Calu3 (cell line): ENCODE measurements at regions of chr3 and their contacts with region 1.

Region 1: GRCh38 chr3:135106445-135106844 is 311.4 kb downstream of the EPHB1 start:
- DNase-seq: peak; percentile 92
- H3K4me3 Mint-ChIP-seq: no peak overlapping the region
- H3K27ac Mint-ChIP-seq: peak overlapping the region; percentile 52
- H3K4me1 Mint-ChIP-seq: peaks cover 19% of the 10 kb centered on the region
- H3K27me3 Mint-ChIP-seq: peaks cover 3% of the 10 kb centered on the region
- CTCF ChIP-seq: no peak

Region 2: GRCh38 chr3:133439563-133439962 is 1666.9 kb before region 1 on chr3:
- CTCF ChIA-PET with region 1: no interaction called
- intact Hi-C with region 1: loop called (anchors 5 kb)
- DNase-seq: no peak
- H3K4me3 Mint-ChIP-seq: no peak overlapping the region
- H3K27ac Mint-ChIP-seq: no peak overlapping the region
- H3K4me1 Mint-ChIP-seq: peaks cover 30% of the 10 kb centered on the region
- H3K27me3 Mint-ChIP-seq: no peaks in the 10 kb centered on the region
- CTCF ChIP-seq: no peak

Region 3: GRCh38 chr3:134473868-134474546 is 632.4 kb before region 1 on chr3:
- CTCF ChIA-PET with region 1: no interaction called
- intact Hi-C with region 1: no loop called
- DNase-seq: peak; percentile 94
- H3K4me3 Mint-ChIP-seq: no peak overlapping the region
- H3K27ac Mint-ChIP-seq: no peak overlapping the region
- H3K4me1 Mint-ChIP-seq: peaks cover 23% of the 10 kb centered on the region
- H3K27me3 Mint-ChIP-seq: no peaks in the 10 kb centered on the region
- CTCF ChIP-seq: peak; percentile 76

Region 4: DNA sequence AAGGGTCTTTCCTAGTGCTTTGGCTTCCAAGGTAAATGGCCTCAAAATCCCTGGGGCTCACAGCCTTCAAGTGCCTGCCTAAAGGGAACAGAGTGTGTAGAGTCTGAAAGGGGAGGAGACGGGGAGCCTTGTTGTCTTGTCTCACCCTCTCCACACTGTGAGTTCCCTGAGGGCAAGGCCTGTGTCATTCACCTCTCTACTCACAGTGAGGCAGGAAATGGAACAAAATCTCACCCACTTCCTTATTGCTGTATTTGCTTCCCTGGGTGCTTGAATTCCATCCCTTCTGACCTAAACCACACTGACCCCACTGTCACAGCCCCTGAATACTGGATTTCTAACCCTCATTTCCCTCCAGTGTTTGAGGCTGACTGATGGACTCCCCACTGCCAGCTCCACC is 113.9 kb before region 1 on chr3:
- CTCF ChIA-PET with region 1: no interaction called
- intact Hi-C with region 1: no loop called
- DNase-seq: no peak
- H3K4me3 Mint-ChIP-seq: no peak overlapping the region
- H3K27ac Mint-ChIP-seq: no peak overlapping the region
- H3K4me1 Mint-ChIP-seq: no peaks in the 10 kb centered on the region
- H3K27me3 Mint-ChIP-seq: peaks cover 29% of the 10 kb centered on the region
- CTCF ChIP-seq: no peak

Region 5: DNA sequence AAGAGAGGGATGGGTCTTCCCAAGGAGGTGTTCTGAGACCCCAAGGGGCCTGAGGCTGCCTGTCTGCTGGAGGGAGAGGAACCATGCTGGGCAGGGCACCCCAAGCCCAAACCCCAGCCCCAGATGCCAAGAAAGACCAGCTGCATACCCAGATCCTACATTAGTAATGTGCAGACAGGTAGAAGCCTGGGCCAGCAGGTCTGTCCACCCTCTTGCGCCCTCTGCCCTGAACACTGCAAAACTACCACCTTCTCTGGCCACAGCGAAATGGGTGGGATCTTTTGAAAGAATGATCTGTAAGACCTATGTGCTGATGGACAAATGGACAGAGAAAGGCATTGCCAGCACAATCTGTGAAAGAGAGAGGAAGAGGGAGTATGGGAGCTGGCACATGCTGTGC is 28.2 kb before region 1 on chr3:
- CTCF ChIA-PET with region 1: no interaction called
- intact Hi-C with region 1: no loop called
- DNase-seq: no peak
- H3K4me3 Mint-ChIP-seq: no peak overlapping the region
- H3K27ac Mint-ChIP-seq: no peak overlapping the region
- H3K4me1 Mint-ChIP-seq: no peaks in the 10 kb centered on the region
- H3K27me3 Mint-ChIP-seq: peaks cover 44% of the 10 kb centered on the region
- CTCF ChIP-seq: no peak

Region 6: DNA sequence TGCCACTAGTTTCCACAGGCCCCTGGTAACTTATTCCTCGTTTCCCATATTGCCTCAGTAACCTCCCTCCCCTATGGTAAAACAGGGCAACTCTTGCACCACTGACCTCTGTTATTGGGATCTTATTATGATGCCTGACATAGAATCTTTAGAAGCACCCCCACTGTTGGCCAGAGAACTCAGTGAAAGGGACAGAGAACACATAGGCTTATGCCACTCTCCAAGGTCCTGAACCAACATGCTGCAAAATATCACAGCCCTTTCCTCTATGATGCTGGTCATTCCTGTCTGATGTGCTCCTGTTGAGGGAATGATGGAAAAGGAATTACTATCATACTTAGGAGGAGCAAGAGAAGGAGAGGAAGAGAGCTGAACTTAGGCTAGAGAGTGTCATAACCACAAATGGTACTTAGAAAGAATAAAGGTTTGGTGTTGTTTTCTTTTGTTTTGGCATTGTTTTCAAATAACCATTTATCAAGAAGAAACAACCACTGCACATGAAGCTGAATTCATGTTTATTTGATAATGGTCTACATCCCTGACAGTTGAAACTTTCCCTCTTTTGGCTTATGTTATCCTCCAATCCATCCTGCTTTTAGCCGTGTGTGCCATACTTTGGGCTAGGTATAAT is 18.8 kb after region 1 on chr3:
- CTCF ChIA-PET with region 1: no interaction called
- intact Hi-C with region 1: loop called (anchors 1 kb)
- DNase-seq: peak; percentile 29
- H3K4me3 Mint-ChIP-seq: no peak overlapping the region
- H3K27ac Mint-ChIP-seq: no peak overlapping the region
- H3K4me1 Mint-ChIP-seq: no peaks in the 10 kb centered on the region
- H3K27me3 Mint-ChIP-seq: peaks cover 13% of the 10 kb centered on the region
- CTCF ChIP-seq: no peak

Region 7: DNA sequence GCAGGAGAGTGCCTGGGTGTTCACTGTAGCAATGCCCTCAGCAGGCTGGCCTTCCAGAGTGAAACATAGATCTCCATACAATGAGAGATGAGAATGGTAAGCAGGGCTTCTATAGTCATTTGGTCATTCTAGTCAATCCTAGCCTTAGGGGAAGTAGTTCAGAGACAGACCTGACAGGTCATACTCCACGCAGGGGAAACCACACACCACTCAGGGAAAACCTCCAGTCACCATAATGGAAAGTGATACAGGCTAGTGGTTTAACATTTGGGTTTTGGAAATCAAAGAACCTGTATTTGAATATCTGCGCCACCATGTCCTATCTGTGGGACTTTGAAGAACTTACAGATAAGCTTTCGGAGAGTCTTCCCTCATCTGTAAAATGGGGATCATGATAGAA is 433.4 kb after region 1 on chr3:
- CTCF ChIA-PET with region 1: no interaction called
- intact Hi-C with region 1: no loop called
- DNase-seq: no peak
- H3K4me3 Mint-ChIP-seq: no peak overlapping the region
- H3K27ac Mint-ChIP-seq: no peak overlapping the region
- H3K4me1 Mint-ChIP-seq: no peaks in the 10 kb centered on the region
- H3K27me3 Mint-ChIP-seq: peaks cover 31% of the 10 kb centered on the region
- CTCF ChIP-seq: no peak